ENCODE measurements at regions of chr18 and their contacts with region 1.

Region 1: GRCh38 chr18:21391074-21391673 is 149.1 kb downstream of the GREB1L start:
- DNase-seq: peak; percentile 99
- ATAC-seq: peak; percentile 86
- H3K4me3 ChIP-seq: peak overlapping the region; percentile 11; the same call in 1 of the 2 replicates
- H3K27ac ChIP-seq: peak overlapping the region; percentile 99
- H3K4me1 ChIP-seq: peaks cover 29% of the 10 kb centered on the region
- H3K27me3 ChIP-seq: no peaks in the 10 kb centered on the region
- CTCF ChIP-seq: no peak

Region 2: GRCh38 chr18:21230436-21230835 is 160.7 kb before region 1 on chr18:
- CTCF ChIA-PET with region 1: no interaction called
- POLR2A ChIA-PET with region 1: no interaction called
- intact Hi-C with region 1: loop called (anchors 10 kb)
- DNase-seq: no peak
- ATAC-seq: no peak
- H3K4me3 ChIP-seq: no peak overlapping the region
- H3K27ac ChIP-seq: no peak overlapping the region
- H3K4me1 ChIP-seq: no peaks in the 10 kb centered on the region
- H3K27me3 ChIP-seq: no peaks in the 10 kb centered on the region
- CTCF ChIP-seq: no peak

Region 3: GRCh38 chr18:21303913-21304312 is 87.3 kb before region 1 on chr18:
- CTCF ChIA-PET with region 1: no interaction called
- POLR2A ChIA-PET with region 1: no interaction called
- intact Hi-C with region 1: loop called (anchors 5 kb)
- DNase-seq: peak; percentile 44
- ATAC-seq: peak; percentile 42
- H3K4me3 ChIP-seq: no peak overlapping the region
- H3K27ac ChIP-seq: no peak overlapping the region
- H3K4me1 ChIP-seq: peaks cover 23% of the 10 kb centered on the region
- H3K27me3 ChIP-seq: no peaks in the 10 kb centered on the region
- CTCF ChIP-seq: no peak

Region 4: GRCh38 chr18:21369146-21369545 is 22.0 kb before region 1 on chr18:
- CTCF ChIA-PET with region 1: interaction called, 5 read pairs
- POLR2A ChIA-PET with region 1: no interaction called
- intact Hi-C with region 1: loop called (anchors 1 kb)
- DNase-seq: no peak
- ATAC-seq: peak; percentile 15; the same call in 1 of the 2 replicates
- H3K4me3 ChIP-seq: no peak overlapping the region
- H3K27ac ChIP-seq: 0 out of 2 replicates have a peak overlapping the region, but pooled peaks have one; percentile 26
- H3K4me1 ChIP-seq: peaks cover 12% of the 10 kb centered on the region
- H3K27me3 ChIP-seq: no peaks in the 10 kb centered on the region
- CTCF ChIP-seq: no peak

Region 5: DNA sequence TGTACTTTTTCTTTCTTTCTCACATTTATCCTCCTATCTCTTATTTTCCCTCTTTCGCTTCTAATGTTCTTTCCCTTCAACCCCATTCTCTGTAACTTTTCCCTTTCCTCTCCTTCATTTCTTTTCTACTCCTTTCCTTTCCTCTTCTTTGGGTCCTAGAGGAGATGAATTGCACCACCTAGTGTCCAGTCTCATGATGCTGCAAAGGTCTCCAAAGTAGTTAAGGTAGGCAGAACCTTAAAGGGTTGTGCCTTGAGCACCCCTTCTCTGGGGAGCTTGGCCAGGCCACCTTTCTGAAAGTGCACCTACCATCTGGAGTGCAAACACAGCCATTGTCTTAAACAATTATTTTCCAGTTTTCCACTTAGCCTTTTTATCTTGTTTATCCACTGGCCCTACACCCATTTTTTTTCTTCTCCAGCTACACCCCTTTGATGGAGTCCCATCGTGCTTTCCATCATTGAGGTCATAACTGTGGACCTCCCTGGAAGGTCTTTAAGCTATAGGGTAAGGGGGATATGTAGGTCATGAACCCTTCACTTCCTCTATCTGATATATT is 53.4 kb after region 1 on chr18:
- CTCF ChIA-PET with region 1: no interaction called
- POLR2A ChIA-PET with region 1: no interaction called
- intact Hi-C with region 1: loop called (anchors 1 kb)
- DNase-seq: peak; percentile 78
- ATAC-seq: peak; percentile 78
- H3K4me3 ChIP-seq: no peak overlapping the region
- H3K27ac ChIP-seq: no peak overlapping the region
- H3K4me1 ChIP-seq: peaks cover 14% of the 10 kb centered on the region
- H3K27me3 ChIP-seq: no peaks in the 10 kb centered on the region
- CTCF ChIP-seq: peak; percentile 95

Measured in PC-3 (cell line).